Psoas muscle (tissue), 8 donors: ENCODE measurements at regions of chr3 and their contacts with region 1.

Region 1: DNA sequence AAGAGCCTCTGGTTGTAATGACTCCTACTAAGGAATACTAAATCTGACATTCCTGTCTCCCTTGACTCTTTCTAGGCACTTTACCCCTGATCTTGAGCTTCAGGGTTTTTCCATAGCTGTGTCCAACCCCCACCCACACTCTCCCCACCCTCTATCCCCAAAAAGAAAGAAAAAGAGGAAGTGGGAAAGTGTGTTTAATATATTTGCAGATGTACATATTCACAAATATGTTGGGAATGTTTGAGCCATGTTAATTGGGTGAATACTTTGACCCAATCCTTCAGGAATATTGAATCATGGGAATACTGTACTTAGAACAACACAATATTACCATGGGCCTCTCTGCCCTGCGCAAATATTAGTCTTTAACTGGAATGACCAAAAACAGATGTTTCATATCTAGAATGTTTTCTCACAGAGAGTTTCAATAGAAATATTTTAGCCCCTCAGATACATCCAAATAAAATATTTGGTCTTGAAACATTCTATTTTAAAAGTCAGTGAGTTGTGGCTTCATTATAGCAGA is 19.8 kb upstream of the PFN2 start:
- DNase-seq: no peak
- ATAC-seq: no peak
- H3K4me3 ChIP-seq: no peak overlapping the region
- H3K27ac ChIP-seq: no peak overlapping the region
- H3K4me1 ChIP-seq: no peaks in the 10 kb centered on the region
- H3K27me3 ChIP-seq: no peaks in the 10 kb centered on the region
- CTCF ChIP-seq: no peak

Region 2: DNA sequence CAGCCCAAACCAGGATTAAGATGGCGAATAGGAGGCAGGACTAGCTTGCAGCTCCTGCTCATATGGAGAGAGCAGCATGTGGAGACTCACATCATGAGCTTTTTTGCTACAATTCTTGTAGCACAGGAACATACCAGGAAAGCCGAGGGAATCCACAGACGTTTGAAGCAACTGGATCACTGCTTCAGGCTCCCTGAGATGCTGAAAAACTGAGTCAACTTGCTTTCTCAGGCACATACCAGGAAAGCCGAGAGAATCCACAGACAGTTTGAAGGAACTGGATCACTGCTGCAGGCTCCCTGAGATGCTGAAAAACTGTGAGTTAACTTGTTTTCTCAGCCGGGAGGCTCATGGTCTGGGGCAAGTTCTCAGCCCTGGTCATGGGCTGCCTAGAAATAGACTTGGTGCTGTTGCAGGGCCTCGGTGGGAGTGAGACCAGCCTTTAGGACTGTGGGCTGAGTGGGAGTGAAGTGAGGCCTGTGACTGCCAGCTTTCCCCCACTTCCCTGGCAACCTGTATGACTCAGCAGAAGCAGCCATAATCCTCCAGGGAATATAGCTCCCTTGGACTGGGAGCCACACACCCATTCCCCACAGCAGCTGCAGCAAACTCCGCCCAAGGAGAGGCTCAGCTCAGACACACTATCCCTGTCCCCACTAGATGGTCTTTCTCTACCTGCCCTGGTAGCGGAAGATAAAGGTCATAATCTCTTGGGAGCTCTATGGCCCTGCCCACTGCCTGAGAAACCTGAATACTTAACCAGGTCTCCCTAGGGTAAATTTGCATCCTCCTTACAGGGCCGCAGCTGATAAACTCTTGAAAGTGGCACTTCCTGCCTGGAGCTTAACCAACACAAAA is 32.1 kb after region 1 on chr3:
- intact Hi-C with region 1: loop called in 1 of 2 experiments (anchors 5 kb)
- DNase-seq: no peak
- ATAC-seq: no peak
- H3K4me3 ChIP-seq: no peak overlapping the region
- H3K27ac ChIP-seq: no peak overlapping the region
- H3K4me1 ChIP-seq: no peaks in the 10 kb centered on the region
- H3K27me3 ChIP-seq: no peaks in the 10 kb centered on the region
- CTCF ChIP-seq: no peak